ENCODE measurements at regions of chr3 and their contacts with region 1.

Region 1: DNA sequence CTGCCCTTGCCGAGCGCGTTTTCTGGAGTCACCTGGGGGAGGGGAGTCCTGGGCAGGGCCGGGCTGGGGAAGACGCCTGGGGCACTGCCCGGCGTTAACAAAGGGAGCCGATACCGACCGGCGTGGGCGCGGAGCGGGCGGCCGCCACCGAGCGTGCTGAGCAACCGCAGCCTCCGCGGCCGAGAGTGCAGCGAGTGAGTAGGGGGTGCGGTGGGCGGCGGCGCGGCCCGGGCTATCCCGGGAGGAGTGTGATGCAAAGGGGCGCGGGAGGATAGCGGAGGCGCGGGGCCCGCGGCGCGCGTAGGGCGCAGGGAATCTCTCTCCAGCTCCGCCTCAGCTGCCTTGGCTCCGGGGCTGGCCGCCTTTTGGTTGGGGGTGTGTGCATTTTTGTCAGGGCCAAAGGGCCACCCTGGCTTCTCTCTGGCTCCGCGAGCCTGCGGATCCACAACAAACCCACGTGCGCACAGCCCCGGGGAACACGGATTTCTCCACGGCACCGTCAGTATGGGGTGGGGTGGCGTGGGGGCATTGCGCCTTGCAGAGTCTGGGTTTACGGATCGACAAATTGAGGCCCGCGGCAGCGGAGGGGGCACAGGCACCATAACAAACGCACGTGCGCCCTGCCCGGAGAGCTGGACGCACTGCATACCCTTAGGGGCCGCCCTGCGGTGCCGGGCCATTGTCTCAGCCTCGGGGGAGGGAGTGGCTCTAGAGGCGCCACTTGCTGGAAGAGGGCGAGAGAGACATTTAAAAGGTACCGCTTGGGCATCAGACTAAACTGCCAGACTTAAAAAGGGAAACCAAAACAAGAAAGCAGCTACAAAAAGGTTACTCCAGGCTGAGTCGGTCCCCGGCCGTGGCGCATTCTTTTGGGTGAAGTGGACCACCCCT is 560 bp downstream of the ST6GAL1 start:
- DNase-seq: peak; percentile 88

Region 2: GRCh38 chr3:186783073-186783730 is 147.7 kb before region 1 on chr3 and contains the start of gene EIF4A2:
- intact Hi-C with region 1: loop called (anchors 5 kb)
- DNase-seq: peak; percentile 95
- total RNA-seq, gene EIF4A2: 361 TPM

Region 3: GRCh38 chr3:186976837-186977750 is 46.2 kb after region 1 on chr3:
- intact Hi-C with region 1: loop called (anchors 2 kb)
- DNase-seq: peak; percentile 82

Region 4: DNA sequence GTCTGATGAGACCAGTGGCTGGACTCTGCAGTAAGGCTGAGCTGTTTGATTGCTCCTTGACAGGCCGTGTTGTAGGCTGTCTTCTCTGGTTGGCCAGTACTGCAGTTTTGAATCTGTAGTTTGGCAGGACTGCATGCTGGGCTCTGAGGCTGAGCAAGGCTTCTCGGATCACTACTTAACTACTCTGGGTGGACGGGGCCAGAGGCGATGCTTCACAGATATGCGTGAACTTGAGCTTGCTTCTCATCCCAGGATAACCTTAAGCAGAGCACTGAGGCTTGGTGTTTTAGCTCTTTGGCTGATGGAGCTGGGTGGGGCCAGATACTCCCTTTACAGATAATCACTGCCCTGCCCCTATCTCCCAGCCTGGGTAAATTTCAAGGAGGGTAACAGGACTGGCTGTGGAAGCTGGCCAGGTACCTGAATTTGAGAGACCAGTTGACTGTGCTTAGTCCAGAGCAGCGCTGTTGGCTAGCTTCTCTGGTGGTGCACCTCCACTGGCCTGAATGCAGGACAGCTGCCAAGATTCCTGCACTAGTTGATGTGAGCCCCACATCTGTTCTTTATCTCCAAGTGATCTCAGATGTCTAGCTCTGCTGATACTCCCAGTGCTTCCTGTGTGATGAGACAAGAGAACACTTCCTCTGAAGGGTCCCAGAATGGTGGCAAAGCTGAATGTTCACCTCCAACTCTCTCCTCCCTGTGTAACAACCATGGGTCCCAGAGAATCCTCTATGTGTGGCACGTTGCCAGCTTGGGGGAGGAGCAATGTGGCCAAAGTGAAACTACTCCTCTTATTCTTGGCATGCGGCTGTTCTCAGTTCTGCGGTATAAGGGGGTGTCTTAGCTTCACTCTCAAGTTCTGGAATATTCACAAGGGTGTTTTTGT is 170.5 kb after region 1 on chr3:
- intact Hi-C with region 1: loop called (anchors 5 kb)
- DNase-seq: peak; percentile 84

Region 5: GRCh38 chr3:187186801-187187421 is 256.0 kb after region 1 on chr3:
- intact Hi-C with region 1: loop called (anchors 5 kb)
- DNase-seq: peak; percentile 79

Region 6: GRCh38 chr3:187211532-187212195 is 280.8 kb after region 1 on chr3:
- intact Hi-C with region 1: no loop called
- DNase-seq: no peak

Measured in cardiac septum (tissue), 1 donor.